Ovary (tissue), 10 donors: ENCODE measurements at regions of chr6 and their contacts with region 1.

Region 1: DNA sequence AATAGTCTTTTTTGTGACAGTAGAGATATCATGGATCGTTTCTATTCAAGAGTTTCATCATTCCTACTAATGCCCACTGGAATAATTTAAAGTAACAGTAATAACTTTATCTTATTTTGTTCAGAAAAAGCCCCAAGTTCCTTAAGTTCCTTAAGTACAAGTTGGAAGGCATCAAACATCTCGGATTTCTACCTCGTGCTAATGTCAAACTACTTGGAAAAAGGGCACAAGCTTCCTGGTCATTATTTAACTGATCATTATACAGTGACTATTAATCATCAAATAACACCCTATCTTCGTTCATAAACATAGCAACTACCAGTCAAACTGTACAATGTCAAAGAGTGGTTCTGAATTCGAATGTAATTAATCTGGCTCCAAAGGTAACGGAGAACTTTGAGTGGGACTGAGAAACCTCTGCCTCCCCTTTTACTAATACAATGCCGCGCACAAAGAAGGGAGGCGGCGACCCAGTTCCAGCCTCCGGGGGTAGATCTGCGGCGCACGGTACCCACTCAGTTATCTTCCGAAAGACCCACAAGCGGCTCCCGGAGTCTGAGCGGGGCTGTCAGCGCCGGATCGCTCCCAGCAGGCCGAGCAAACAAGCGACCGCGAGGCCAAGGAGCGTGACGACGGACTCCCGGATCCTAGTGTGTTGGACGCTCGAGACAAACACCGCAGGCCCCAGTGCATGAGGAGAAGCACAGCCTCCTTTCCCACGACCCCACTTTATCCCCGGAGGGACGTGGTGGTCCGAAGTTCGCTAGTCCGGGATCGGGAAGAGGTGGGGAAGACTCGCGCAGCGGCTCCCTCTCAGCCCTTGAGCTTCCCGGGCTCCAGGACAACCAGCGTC is 716 bp downstream of the SHPRH start:
- DNase-seq: no peak
- H3K4me3 ChIP-seq: peak overlapping the region; percentile 88
- H3K27ac ChIP-seq: peak overlapping the region; percentile 81 to 85
- H3K4me1 ChIP-seq: peaks cover 11% of the 10 kb centered on the region
- H3K27me3 ChIP-seq: no peaks in the 10 kb centered on the region
- CTCF ChIP-seq: no peak
- EP300 ChIP-seq: no peak
- POLR2A ChIP-seq: no peak

Region 2: GRCh38 chr6:145734486-145735355 is 228.7 kb before region 1 on chr6:
- intact Hi-C with region 1: loop called in 2 of 4 experiments (anchors 10 kb)
- DNase-seq: peak; percentile 85 to 92 (median 89)
- H3K4me3 ChIP-seq: peak overlapping the region; percentile 57
- H3K27ac ChIP-seq: peak overlapping the region; percentile 96 to 99
- H3K4me1 ChIP-seq: peaks cover 2% of the 10 kb centered on the region
- H3K27me3 ChIP-seq: no peaks in the 10 kb centered on the region
- CTCF ChIP-seq: no peak
- EP300 ChIP-seq: peak; percentile 5
- POLR2A ChIP-seq: peak; percentile 57